SK-N-SH (cell line): ENCODE measurements at regions of chr1 and their contacts with region 1.

Region 1: GRCh38 chr1:58652651-58653184 is 47.1 kb downstream of the MYSM1 start:
- DNase-seq: peak; percentile 57
- H3K4me3 ChIP-seq: peak overlapping the region in 1 of 2 experiments; percentile 0; a peak in 1 of 4 replicates
- H3K27ac ChIP-seq: no peak overlapping the region
- H3K4me1 ChIP-seq: no peaks in the 10 kb centered on the region; a peak in 2 of 4 replicates
- H3K27me3 ChIP-seq: no peaks in the 10 kb centered on the region
- CTCF ChIP-seq: peak; percentile 91
- EP300 ChIP-seq: no peak
- RAD21 ChIP-seq: peak; percentile 89

Region 2: DNA sequence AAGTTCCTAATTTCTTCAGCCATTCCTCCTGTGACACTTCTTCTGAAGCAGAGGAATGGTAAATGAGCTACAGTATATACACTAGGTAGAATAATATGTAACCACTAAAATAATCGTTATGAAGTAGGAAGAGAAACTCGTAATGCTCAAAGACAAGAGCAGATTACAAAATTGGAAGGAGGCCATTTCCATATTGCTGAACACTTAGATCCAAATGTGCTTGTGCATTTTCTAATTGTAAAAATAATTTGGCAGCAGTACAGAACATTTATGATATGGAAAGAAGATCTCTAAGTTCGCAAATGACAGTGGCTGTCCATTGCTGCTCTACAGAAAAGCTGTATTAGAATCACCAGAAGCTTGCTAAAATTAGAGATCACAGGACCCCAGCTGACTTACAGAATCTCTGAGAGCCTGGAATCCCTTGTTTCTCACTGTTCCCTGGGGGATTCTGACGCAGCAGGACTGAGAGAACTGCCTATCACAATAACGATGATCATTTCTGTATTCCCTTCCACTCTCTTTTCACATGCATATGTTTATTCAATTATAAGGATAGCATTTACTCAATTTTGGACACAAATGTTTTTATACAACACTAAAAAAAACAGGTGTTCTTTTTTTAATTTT is 348.3 kb before region 1 on chr1:
- CTCF ChIA-PET with region 1: no interaction called
- POLR2A ChIA-PET with region 1: no interaction called
- DNase-seq: no peak
- H3K4me3 ChIP-seq: no peak overlapping the region
- H3K27ac ChIP-seq: no peak overlapping the region
- H3K4me1 ChIP-seq: no peaks in the 10 kb centered on the region; a peak in 1 of 4 replicates
- H3K27me3 ChIP-seq: no peaks in the 10 kb centered on the region
- CTCF ChIP-seq: no peak
- EP300 ChIP-seq: no peak
- RAD21 ChIP-seq: no peak

Region 3: GRCh38 chr1:58515794-58516401 is 136.8 kb before region 1 on chr1:
- CTCF ChIA-PET with region 1: interaction called, 94 read pairs
- POLR2A ChIA-PET with region 1: no interaction called
- DNase-seq: peak; percentile 64
- H3K4me3 ChIP-seq: peak overlapping the region in 1 of 2 experiments; percentile 21; a peak in 1 of 4 replicates
- H3K27ac ChIP-seq: no peak overlapping the region
- H3K4me1 ChIP-seq: no peaks in the 10 kb centered on the region
- H3K27me3 ChIP-seq: no peaks in the 10 kb centered on the region
- CTCF ChIP-seq: peak; percentile 85
- EP300 ChIP-seq: no peak
- RAD21 ChIP-seq: peak; percentile 91

Region 4: GRCh38 chr1:58546520-58547308 is 106.0 kb before region 1 on chr1 and contains the start of gene OMA1:
- CTCF ChIA-PET with region 1: interaction called, 19 read pairs
- POLR2A ChIA-PET with region 1: no interaction called
- DNase-seq: peak; percentile 96
- H3K4me3 ChIP-seq: peak within 1 kb of the TSS; percentile 66 to 69
- H3K27ac ChIP-seq: peak within 1 kb of the TSS; percentile 87 to 93
- H3K4me1 ChIP-seq: peaks cover 2 to 3% of the 10 kb centered on the region in 2 experiments; a peak in 2 of 4 replicates
- H3K27me3 ChIP-seq: no peaks in the 10 kb centered on the region
- CTCF ChIP-seq: peak; percentile 95
- EP300 ChIP-seq: no peak; a peak in 1 of 4 replicates
- RAD21 ChIP-seq: peak; percentile 86
- polyA plus RNA-seq, gene OMA1: 6.9 and 9.1 TPM in 2 replicates

Region 5: DNA sequence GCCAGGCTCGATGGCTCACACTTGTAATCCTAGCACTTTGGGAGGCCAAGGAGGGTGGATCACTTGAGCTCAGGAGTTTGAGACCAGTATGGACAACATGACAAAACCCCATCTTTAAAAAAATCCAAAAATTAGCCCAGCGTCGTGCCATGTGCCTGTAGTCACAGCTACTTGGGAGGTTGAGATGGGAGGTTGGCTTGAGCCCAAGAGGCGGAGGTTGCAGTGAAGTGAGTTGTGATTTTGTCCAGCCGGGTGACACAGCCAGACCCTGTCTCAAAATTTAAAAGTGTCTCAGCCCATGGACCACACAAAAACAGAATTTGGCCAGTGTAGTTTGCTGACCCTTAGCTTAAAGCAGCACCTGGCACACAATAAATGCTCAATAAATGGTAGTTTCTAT is 64.3 kb before region 1 on chr1:
- CTCF ChIA-PET with region 1: no interaction called
- POLR2A ChIA-PET with region 1: no interaction called
- DNase-seq: no peak
- H3K4me3 ChIP-seq: no peak overlapping the region
- H3K27ac ChIP-seq: no peak overlapping the region
- H3K4me1 ChIP-seq: peaks cover 5 to 19% of the 10 kb centered on the region in 2 experiments
- H3K27me3 ChIP-seq: no peaks in the 10 kb centered on the region
- CTCF ChIP-seq: no peak
- EP300 ChIP-seq: no peak
- RAD21 ChIP-seq: no peak

Region 6: DNA sequence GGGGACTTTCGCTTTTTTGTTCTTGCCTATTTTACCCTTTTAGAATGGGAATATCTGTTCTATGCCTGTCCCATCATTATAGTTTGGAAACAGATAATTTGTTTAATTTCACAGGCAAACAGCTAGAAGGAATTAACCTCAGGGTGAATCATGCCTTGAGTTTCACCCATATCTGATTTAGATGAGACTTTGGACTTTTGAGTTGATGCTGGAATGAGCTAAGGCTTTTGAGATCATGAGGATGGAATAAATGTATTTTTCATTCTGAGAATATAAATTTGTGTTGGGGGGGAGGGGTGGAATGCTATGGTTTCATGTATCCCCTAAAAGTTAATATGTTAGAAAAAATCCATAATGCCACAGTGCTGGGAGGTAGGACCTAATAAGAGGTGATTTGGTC is 19.6 kb before region 1 on chr1:
- CTCF ChIA-PET with region 1: interaction called, 14 read pairs
- POLR2A ChIA-PET with region 1: no interaction called
- DNase-seq: no peak
- H3K4me3 ChIP-seq: no peak overlapping the region
- H3K27ac ChIP-seq: no peak overlapping the region
- H3K4me1 ChIP-seq: 0 out of 4 replicates have a peak, but pooled peaks cover 0 to 3% of the 10 kb centered on the region in 2 experiments
- H3K27me3 ChIP-seq: no peaks in the 10 kb centered on the region
- CTCF ChIP-seq: no peak
- EP300 ChIP-seq: no peak
- RAD21 ChIP-seq: no peak

Region 7: DNA sequence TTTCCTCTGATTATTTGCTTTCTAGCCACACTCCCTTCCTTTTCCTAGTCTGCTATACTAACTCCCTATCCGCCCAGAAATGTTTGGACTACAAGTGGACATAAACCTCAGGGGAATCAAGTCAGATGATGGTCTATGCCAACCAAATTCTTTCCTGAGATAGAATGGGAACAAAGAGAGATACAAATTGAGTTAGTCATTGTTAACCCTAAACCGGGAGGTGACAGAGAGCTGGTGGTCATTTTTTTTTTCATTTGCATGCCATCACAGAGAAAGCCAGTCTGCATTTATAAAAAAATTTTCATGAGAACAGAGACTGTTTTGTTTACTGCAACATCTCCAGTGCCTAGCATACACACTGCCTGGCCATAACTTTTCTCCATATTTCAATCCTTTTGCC is 12.2 kb after region 1 on chr1:
- CTCF ChIA-PET with region 1: interaction called, 38 read pairs
- POLR2A ChIA-PET with region 1: no interaction called
- DNase-seq: no peak
- H3K4me3 ChIP-seq: no peak overlapping the region
- H3K27ac ChIP-seq: no peak overlapping the region
- H3K4me1 ChIP-seq: no peaks in the 10 kb centered on the region
- H3K27me3 ChIP-seq: no peaks in the 10 kb centered on the region
- CTCF ChIP-seq: no peak
- EP300 ChIP-seq: no peak
- RAD21 ChIP-seq: no peak

Region 8: GRCh38 chr1:58670181-58670580 is 17.5 kb after region 1 on chr1:
- CTCF ChIA-PET with region 1: interaction called, 38 read pairs
- POLR2A ChIA-PET with region 1: no interaction called
- DNase-seq: no peak
- H3K4me3 ChIP-seq: no peak overlapping the region
- H3K27ac ChIP-seq: no peak overlapping the region
- H3K4me1 ChIP-seq: no peaks in the 10 kb centered on the region
- H3K27me3 ChIP-seq: no peaks in the 10 kb centered on the region
- CTCF ChIP-seq: no peak
- EP300 ChIP-seq: no peak
- RAD21 ChIP-seq: no peak

Region 9: DNA sequence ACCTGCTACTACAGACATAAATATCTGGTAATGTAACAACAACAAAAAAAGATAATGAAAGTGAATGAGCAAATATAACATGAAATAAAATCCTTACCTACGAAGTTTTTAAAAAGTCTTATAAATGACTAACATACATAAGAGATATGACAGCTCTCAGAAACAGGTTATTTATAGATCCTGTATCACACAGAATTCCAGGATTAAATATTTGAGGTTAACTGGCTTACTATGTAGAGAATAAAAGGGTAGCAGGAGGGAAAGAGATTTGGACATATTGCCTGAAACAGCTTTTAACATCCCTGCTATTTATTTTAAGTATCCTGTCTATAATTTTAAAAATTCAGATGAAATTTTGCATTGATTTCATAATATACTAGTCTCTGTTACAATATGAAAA is 30.8 kb after region 1 on chr1:
- CTCF ChIA-PET with region 1: interaction called, 10 read pairs
- POLR2A ChIA-PET with region 1: no interaction called
- DNase-seq: no peak
- H3K4me3 ChIP-seq: no peak overlapping the region
- H3K27ac ChIP-seq: no peak overlapping the region
- H3K4me1 ChIP-seq: peaks cover 0 to 3% of the 10 kb centered on the region in 2 experiments; a peak in 1 of 4 replicates
- H3K27me3 ChIP-seq: no peaks in the 10 kb centered on the region
- CTCF ChIP-seq: no peak
- EP300 ChIP-seq: no peak
- RAD21 ChIP-seq: no peak